ENCODE measurements at regions of chr19 and their contacts with region 1.

Region 1: DNA sequence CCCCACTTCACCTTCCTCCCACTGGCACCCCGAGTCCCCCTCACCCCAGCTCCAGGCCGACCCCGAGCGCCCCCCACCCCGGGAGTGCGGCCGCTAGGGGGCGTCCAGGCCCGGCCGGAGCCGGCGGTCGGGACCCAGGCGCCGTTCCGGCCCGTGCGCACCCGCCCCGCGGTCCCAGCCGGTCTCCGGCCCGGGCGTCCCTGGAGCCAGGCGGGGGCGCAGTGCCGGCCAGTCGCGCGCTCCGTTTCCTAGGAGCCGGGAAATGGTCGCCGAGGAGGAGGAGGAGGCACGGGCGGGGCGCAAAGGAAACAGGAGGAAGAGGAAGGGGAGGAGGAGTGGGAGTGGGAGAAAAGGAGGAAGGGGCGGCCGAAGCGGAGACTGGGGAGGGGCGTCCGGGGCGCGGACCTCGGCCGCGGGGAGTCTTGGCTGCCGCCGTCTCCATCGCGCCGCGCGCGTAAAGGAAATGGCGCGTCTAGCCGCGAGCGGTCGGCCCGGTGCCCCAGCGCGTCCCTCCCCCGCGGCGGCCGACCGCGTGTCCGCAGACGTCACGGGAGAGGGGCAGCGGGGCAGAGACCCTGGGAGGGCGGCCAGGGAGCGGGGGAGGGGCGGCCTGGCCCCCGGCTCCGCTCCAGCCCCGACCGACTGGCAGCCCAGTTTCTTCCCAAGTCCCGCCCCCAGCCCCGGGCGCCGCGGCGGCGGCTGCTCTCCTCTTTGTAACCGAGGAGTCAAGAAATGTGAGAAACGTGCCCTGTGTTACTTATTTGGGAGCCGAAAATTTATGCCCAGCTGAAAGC is 1.1 kb upstream of the KCTD15 start:
- DNase-seq: no peak
- H3K4me3 ChIP-seq: peak overlapping the region; percentile 70
- H3K27ac ChIP-seq: peak overlapping the region; percentile 80
- H3K27me3 ChIP-seq: peaks cover 8% of the 10 kb centered on the region
- CTCF ChIP-seq: peak; percentile 63

Region 2: GRCh38 chr19:33819880-33820781 is 24.6 kb after region 1 on chr19:
- CTCF ChIA-PET with region 1: interaction called, 13 read pairs
- POLR2A ChIA-PET with region 1: interaction called, 3 read pairs
- DNase-seq: no peak
- H3K4me3 ChIP-seq: peak overlapping the region; percentile 34
- H3K27ac ChIP-seq: peak overlapping the region; percentile 21
- H3K27me3 ChIP-seq: no peaks in the 10 kb centered on the region
- CTCF ChIP-seq: no peak

Region 3: DNA sequence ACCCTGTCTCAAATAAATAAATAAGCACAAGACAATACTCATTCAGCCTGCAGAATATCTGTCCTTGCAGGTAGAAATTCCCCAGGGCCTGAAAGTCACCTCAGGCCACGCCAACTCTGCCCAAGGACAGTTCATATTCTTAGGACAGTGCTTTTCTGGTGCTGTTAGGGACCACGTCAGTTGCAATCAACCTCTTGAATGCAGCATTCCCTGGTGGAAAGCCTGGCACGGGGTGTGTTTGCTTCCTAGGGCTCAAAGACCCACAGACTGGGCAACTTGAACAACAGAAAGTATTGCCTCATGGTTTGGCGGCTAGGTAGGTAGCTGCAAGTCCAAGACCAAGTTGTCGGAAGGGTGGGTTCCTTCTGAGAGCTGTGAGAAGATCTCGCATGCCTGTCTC is 161.4 kb after region 1 on chr19:
- CTCF ChIA-PET with region 1: no interaction called
- POLR2A ChIA-PET with region 1: no interaction called
- DNase-seq: no peak
- H3K4me3 ChIP-seq: no peak overlapping the region
- H3K27ac ChIP-seq: no peak overlapping the region
- H3K27me3 ChIP-seq: no peaks in the 10 kb centered on the region
- CTCF ChIP-seq: no peak